ENCODE measurements at regions of chr1 and their contacts with region 1.

Region 1: GRCh38 chr1:111702504-111703050 is 36.6 kb downstream of the INKA2 start:
- DNase-seq: no peak
- ATAC-seq: no peak
- H3K4me3 ChIP-seq: no peak overlapping the region
- H3K4me3 Mint-ChIP-seq: no peak overlapping the region
- H3K27ac ChIP-seq: no peak overlapping the region
- H3K27ac Mint-ChIP-seq: no peak overlapping the region
- H3K4me1 ChIP-seq: no peaks in the 10 kb centered on the region
- H3K4me1 Mint-ChIP-seq: peaks cover 7% of the 10 kb centered on the region
- H3K27me3 ChIP-seq: no peaks in the 10 kb centered on the region
- H3K27me3 Mint-ChIP-seq: no peaks in the 10 kb centered on the region
- CTCF ChIP-seq: no peak

Region 2: DNA sequence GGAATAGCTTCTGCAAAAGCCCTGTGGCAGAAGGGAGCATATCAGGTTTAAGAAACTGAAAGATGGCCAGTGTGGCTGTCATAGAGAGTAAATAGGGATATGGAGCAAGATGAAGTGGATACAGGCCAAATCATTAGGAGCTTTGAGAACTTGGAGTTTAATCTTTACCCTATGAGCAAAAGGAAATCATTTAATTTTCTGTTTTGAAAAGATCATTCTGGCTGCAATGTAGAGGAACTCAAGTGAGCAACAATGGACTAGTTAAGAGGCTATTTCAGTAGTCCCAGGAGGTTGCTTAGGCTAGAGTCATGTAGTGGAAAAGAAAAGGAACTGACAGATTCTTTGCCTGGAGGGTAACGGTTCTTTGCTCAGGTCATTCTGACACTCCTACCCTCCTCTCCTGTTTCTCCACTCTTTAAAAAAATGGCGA is 35.7 kb before region 1 on chr1:
- CTCF ChIA-PET with region 1: no interaction called
- POLR2A ChIA-PET with region 1: interaction called, 6 read pairs
- intact Hi-C with region 1: loop called in 1 of 2 experiments (anchors 1 kb)
- DNase-seq: no peak
- ATAC-seq: no peak
- H3K4me3 ChIP-seq: no peak overlapping the region
- H3K4me3 Mint-ChIP-seq: no peak overlapping the region
- H3K27ac ChIP-seq: no peak overlapping the region
- H3K27ac Mint-ChIP-seq: peak overlapping the region; percentile 19
- H3K4me1 ChIP-seq: peaks cover 47% of the 10 kb centered on the region
- H3K4me1 Mint-ChIP-seq: peaks cover 77% of the 10 kb centered on the region
- H3K27me3 ChIP-seq: no peaks in the 10 kb centered on the region
- H3K27me3 Mint-ChIP-seq: no peaks in the 10 kb centered on the region
- CTCF ChIP-seq: no peak

Measured in CD8-positive, alpha-beta T cell (primary cell).